Left cardiac atrium (tissue), 4 donors: ENCODE measurements at regions of chr2 and their contacts with region 1.

Region 1: DNA sequence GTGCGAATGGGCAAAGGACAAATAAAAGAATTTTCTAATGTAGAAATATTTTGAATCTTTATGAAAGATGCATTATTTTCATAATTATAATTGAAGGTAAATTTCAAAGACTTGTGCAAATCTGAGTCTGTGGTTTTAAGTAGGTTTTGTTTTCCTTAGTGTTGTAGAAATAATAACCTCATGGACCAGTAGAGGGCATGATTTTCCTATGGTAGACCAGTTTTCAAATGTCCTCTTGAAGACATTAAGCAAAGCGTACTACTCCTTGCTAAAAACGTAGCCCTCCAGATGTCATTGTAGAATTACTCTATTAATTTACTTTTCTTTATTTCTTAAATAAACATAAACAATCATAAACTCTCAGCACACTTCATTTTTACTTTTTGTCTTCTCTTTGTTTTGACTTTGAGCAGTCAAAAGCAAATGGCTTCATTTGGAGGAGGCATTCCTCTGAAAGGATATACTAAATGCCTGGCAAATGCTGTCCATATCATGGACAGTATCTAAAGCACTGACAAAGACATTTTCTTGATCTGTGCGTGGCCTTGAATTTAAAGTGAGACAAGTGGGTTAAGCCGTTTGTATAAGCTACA is 85.8 kb upstream of the FAM237A start:
- DNase-seq: no peak
- ATAC-seq: no peak

Region 2: GRCh38 chr2:206442833-206443734 is 113.4 kb before region 1 on chr2 and contains the start of gene ADAM23:
- intact Hi-C with region 1: loop called in 1 of 2 experiments (anchors 5 kb)
- DNase-seq: peak; percentile 51
- ATAC-seq: peak; percentile 91
- total RNA-seq, gene ADAM23: 30.2 to 31.1 TPM